Left ventricle myocardium inferior (tissue), 1 donor: ENCODE measurements at regions of chr16 and their contacts with region 1.

Region 1: DNA sequence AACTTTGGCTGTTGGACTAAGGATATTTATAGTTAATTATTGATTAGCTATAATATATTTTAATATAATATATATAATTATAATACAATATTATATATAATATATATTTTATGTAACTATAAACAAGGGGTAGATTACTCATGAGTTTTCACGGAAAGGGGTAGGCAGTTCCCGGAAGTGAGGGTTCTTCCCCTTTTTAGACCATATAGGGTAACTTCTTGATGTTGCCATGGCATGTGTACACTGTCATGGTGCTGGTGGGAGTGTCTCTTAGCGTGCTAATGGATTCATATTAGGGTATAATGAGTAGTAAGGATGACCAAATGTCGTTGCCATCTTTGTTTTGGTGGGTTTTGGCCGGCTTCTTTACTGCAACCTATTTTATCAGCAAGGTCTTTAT is 315.6 kb downstream of the WWOX start:
- DNase-seq: no peak
- H3K4me3 ChIP-seq: no peak overlapping the region
- H3K27ac ChIP-seq: no peak overlapping the region
- H3K4me1 ChIP-seq: no peaks in the 10 kb centered on the region
- H3K27me3 ChIP-seq: no peaks in the 10 kb centered on the region
- CTCF ChIP-seq: no peak

Region 2: GRCh38 chr16:78147896-78148535 is 267.0 kb before region 1 on chr16:
- intact Hi-C with region 1: loop called (anchors 5 kb)
- DNase-seq: no peak
- H3K4me3 ChIP-seq: no peak overlapping the region
- H3K27ac ChIP-seq: no peak overlapping the region
- H3K4me1 ChIP-seq: no peaks in the 10 kb centered on the region
- H3K27me3 ChIP-seq: no peaks in the 10 kb centered on the region
- CTCF ChIP-seq: no peak

Region 3: GRCh38 chr16:78458588-78458987 is 43.6 kb after region 1 on chr16:
- intact Hi-C with region 1: no loop called
- DNase-seq: no peak
- H3K4me3 ChIP-seq: no peak overlapping the region
- H3K27ac ChIP-seq: no peak overlapping the region
- H3K4me1 ChIP-seq: peaks cover 6% of the 10 kb centered on the region
- H3K27me3 ChIP-seq: no peaks in the 10 kb centered on the region
- CTCF ChIP-seq: no peak